Posterior cingulate gyrus (tissue), 11 donors: ENCODE measurements at regions of chr9 and their contacts with region 1.

Region 1: DNA sequence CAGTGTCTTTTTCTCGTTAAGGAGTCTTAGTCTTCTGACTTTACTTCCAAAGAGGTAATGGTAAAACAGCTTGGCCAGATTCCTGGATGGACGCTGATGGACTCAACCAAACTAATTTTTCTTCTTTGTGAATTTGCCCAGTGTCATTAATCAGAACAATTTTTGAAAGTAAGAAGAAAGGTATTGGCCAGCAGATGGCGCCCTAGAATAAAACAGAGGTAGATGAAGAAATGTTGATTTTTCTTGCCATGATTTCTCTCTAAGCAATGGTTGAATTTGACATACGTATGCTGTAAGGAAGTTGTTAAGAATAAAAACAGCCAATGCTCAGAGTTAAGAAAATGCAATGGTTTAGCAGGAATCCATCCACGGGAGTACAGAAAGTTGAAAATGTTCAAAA is 500.0 kb downstream of the DIRAS2 start:
- DNase-seq: peak in 3 of 10 donors; percentile 28 to 39 (median 31)

Region 2: GRCh38 chr9:89755821-89756220 is 386.8 kb before region 1 on chr9:
- intact Hi-C with region 1: no loop called
- DNase-seq: peak in 2 of 10 donors; percentile 31 to 53

Region 3: GRCh38 chr9:90095682-90096081 is 46.9 kb before region 1 on chr9:
- intact Hi-C with region 1: no loop called
- DNase-seq: peak in 5 of 10 donors; percentile 18 to 88 (median 34)

Region 4: DNA sequence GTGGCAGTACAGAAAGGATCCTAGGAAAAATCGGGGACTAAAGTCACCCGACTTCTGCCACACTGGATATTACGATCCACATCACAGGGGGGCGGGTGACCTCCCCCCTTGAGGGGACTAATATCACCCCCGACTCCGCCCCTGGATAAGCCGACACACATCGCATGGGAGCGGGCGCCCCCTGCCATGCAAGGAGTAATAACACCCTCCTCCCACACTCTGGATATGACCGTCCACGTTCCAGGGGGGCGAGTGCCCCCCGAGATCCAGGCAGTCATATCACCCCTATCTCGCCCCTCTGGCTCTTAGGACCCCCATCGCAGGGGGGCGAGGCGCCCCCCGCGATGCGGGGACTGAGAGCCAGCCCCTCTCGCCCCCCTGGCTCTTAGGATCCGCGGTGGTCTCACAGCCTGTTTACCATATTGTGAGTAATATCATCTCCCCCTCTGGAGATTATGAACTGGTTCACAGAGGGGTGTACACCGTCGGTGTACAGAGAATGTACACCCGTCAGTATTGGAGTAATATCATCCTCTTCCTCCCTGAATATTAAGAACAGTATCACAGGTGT is 77.1 kb after region 1 on chr9:
- intact Hi-C with region 1: loop called (anchors 10 kb)
- DNase-seq: peak in 1 of 10 donors; percentile 83

Region 5: GRCh38 chr9:90767523-90768100 is 625.0 kb after region 1 on chr9:
- intact Hi-C with region 1: loop called (anchors 10 kb)
- DNase-seq: no peak

Region 6: DNA sequence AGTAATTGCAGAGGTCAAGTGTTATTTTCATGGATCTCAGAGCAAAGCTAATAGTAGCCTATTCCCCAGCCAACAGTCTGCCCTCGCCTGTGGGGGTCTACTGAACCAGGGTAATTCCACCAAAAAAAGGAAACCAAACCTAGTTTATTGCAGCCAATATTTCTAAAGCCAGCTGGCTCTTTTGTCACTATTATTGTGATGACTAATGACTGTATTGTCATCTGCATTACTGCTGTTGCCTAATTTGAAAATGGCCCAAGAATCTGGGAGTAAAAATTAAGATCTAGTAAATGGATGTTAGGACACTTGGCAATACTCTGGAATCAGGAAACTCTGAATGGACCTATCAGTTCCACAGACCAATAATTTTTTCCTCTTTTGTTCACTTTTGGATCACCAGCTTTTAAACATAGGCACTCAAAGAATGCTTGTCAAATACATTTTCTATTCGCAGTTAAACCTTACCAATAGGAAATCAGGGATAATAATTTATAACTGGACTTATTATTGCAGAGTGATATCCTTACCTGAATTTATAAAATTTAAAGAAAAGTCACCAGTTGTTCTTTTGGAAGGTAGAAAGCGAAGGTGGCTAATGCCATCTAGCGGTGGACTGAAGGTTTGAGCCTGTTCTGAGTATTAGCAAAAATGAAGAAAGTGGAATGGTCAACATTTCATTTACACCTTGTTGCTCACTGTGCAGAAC is 728.2 kb after region 1 on chr9:
- intact Hi-C with region 1: loop called (anchors 2 kb)
- DNase-seq: peak in 2 of 10 donors; percentile 19 to 34